Activated B cell treated with CpG ODN at 0.5 μM for 24 hours (primary cell): ENCODE measurements at regions of chr14 and their contacts with region 1.

Region 1: DNA sequence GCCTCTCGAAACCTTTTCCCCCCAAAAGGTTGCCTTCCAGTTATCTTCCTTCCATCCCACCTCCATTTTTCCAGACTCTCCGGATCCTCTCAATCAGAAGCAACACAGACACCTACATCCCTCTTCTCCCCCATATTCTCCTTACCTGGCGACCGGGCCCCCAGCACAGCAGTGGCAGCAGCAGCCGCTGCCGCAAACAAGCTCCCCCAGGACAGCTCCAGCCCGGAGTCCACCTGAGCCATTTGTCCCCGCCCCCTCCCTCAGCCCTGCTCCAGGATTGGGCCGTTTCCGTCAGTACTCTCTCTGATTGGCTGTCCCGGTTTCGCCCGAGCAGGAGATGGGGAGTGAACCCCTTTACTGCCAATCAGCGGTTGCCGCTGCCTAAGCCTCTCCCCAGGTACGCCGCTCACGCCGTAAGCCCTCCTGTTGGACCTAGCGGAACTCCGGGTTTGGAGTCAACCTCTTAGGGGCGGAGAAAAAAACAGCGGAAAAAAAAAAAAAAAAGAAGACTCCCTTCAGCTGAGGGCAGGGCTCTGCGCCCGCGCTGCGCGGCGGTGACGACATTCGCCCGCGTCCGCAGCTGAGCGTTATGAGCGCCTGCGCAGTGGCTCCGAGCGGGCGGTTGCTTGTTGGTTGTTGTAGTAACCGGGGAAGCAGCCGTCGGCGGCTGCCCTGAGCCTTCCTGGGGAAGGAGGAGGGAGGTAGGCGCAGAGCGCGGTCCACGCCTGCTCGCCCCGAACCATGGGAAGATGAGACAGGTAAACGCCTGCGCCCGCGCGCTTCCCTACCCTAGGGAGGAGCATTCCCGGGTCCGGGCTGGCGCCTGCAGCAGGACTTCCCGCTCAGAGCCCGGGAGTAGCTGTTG is at the starts of genes ERG28 and TTLL5:
- DNase-seq: peak; percentile 94
- ATAC-seq: peak; percentile 92
- H3K4me3 Mint-ChIP-seq: peak within 1 kb of the TSS; percentile 99
- H3K27ac Mint-ChIP-seq: peak within 1 kb of the TSS; percentile 97
- H3K4me1 Mint-ChIP-seq: peaks cover 25% of the 10 kb centered on the region
- H3K27me3 Mint-ChIP-seq: no peaks in the 10 kb centered on the region
- CTCF ChIP-seq: no peak
- total RNA-seq, gene ERG28: 28.4 and 30.7 TPM in 2 replicates
- total RNA-seq, gene TTLL5: 37.9 and 39.1 TPM in 2 replicates

Region 2: GRCh38 chr14:74762917-74763802 is 897.7 kb before region 1 on chr14 and contains the start of gene YLPM1:
- CTCF ChIA-PET with region 1: no interaction called
- POLR2A ChIA-PET with region 1: no interaction called
- intact Hi-C with region 1: loop called (anchors 2 kb)
- DNase-seq: peak; percentile 86
- ATAC-seq: peak; percentile 95
- H3K4me3 Mint-ChIP-seq: peak within 1 kb of the TSS; percentile 90
- H3K27ac Mint-ChIP-seq: peak within 1 kb of the TSS; percentile 90
- H3K4me1 Mint-ChIP-seq: peaks cover 55% of the 10 kb centered on the region
- H3K27me3 Mint-ChIP-seq: no peaks in the 10 kb centered on the region
- CTCF ChIP-seq: no peak
- total RNA-seq, gene YLPM1: 68.5 and 85.9 TPM in 2 replicates

Region 3: GRCh38 chr14:75126679-75127473 is 534.0 kb before region 1 on chr14 and contains the start of gene NEK9:
- CTCF ChIA-PET with region 1: interaction called, 3 read pairs
- POLR2A ChIA-PET with region 1: interaction called, 9 read pairs
- intact Hi-C with region 1: loop called (anchors 2 kb)
- DNase-seq: peak; percentile 86
- ATAC-seq: peak; percentile 88
- H3K4me3 Mint-ChIP-seq: peak within 1 kb of the TSS; percentile 96
- H3K27ac Mint-ChIP-seq: peak within 1 kb of the TSS; percentile 94
- H3K4me1 Mint-ChIP-seq: peaks cover 38% of the 10 kb centered on the region
- H3K27me3 Mint-ChIP-seq: no peaks in the 10 kb centered on the region
- CTCF ChIP-seq: no peak
- total RNA-seq, gene NEK9: 96.1 and 97.7 TPM in 2 replicates

Region 4: DNA sequence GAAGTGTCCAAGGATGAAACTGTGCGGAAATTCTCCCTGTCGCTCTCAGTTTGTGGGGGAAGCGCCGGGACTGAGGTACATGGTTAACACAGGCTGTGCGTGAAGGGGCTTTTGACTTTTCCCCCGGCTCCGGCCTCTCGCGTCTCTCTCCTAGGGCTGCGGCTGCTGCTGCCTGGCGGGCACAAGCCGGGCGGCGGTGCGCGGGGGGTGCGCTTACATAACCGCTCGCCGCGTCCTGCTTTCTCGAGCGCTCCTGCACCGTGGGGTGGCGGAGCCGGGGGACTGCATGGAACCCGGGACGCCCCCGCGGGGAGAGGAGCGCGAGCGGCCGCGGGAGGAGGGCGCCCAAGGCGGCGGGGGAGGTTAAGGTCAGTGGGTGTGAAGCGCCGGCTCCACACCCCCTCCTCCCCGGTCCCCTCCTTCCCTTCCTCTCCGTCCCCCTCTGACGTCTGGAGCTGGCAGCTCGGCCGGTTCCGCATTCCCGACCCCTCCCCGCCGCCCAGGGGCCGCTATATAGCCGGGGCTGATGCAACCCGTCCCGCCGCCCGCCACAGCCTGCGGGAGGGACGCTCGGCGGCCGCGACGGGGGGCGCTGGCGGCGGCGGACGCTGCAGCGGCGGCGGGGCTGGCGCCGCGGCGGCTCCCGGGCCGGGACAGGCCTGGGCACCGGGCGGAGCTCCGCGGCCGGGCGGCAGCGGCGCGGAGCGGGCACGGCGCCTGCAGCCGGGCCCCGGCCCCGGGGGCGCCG is 233.2 kb before region 1 on chr14 and contains the start of gene JDP2:
- CTCF ChIA-PET with region 1: no interaction called
- POLR2A ChIA-PET with region 1: interaction called, 4 read pairs
- intact Hi-C with region 1: loop called (anchors 2 kb)
- DNase-seq: peak; percentile 57
- ATAC-seq: peak; percentile 53
- H3K4me3 Mint-ChIP-seq: peak within 1 kb of the TSS; percentile 88
- H3K27ac Mint-ChIP-seq: peak within 1 kb of the TSS; percentile 96
- H3K4me1 Mint-ChIP-seq: peaks cover 37% of the 10 kb centered on the region
- H3K27me3 Mint-ChIP-seq: no peaks in the 10 kb centered on the region
- CTCF ChIP-seq: no peak
- total RNA-seq, gene JDP2: 21.2 and 21.8 TPM in 2 replicates

Region 5: DNA sequence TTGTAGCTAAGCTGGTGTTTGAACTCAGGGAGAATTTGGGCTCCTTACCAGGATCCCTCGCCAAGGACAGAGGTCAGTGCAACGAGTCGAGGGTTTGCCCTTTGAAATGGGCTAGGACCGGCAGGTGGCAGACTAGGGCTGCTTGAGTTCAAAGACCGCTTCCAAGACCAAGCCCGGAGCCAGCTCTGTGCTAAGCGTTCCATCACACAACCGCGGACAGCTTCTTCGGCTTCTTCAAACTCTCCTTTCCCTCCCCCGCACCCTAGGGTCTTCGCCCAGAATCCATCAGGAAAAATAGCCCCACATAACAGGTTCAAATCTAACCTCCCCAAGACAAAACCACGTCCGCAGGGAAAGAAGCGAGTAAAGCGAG is 83.1 kb before region 1 on chr14:
- CTCF ChIA-PET with region 1: interaction called, 264 read pairs
- POLR2A ChIA-PET with region 1: interaction called, 10 read pairs
- intact Hi-C with region 1: no loop called
- DNase-seq: peak; percentile 60
- ATAC-seq: peak; percentile 85
- H3K4me3 Mint-ChIP-seq: peak overlapping the region; percentile 89
- H3K27ac Mint-ChIP-seq: peak overlapping the region; percentile 72
- H3K4me1 Mint-ChIP-seq: peaks cover 29% of the 10 kb centered on the region
- H3K27me3 Mint-ChIP-seq: peaks cover 3% of the 10 kb centered on the region
- CTCF ChIP-seq: peak; percentile 36

Region 6: GRCh38 chr14:75648066-75648838 is 12.6 kb before region 1 on chr14:
- CTCF ChIA-PET with region 1: no interaction called
- POLR2A ChIA-PET with region 1: no interaction called
- intact Hi-C with region 1: no loop called
- DNase-seq: no peak
- ATAC-seq: no peak
- H3K4me3 Mint-ChIP-seq: no peak overlapping the region
- H3K27ac Mint-ChIP-seq: no peak overlapping the region
- H3K4me1 Mint-ChIP-seq: no peaks in the 10 kb centered on the region
- H3K27me3 Mint-ChIP-seq: no peaks in the 10 kb centered on the region
- CTCF ChIP-seq: no peak

Region 7: GRCh38 chr14:76151398-76152339 is 490.8 kb after region 1 on chr14 and contains the start of gene GPATCH2L:
- CTCF ChIA-PET with region 1: no interaction called
- POLR2A ChIA-PET with region 1: no interaction called
- intact Hi-C with region 1: loop called (anchors 2 kb)
- DNase-seq: peak; percentile 97
- ATAC-seq: peak; percentile 93
- H3K4me3 Mint-ChIP-seq: peak within 1 kb of the TSS; percentile 97
- H3K27ac Mint-ChIP-seq: peak within 1 kb of the TSS; percentile 94
- H3K4me1 Mint-ChIP-seq: peaks cover 53% of the 10 kb centered on the region
- H3K27me3 Mint-ChIP-seq: no peaks in the 10 kb centered on the region
- CTCF ChIP-seq: no peak
- total RNA-seq, gene GPATCH2L: 64.8 and 82.3 TPM in 2 replicates

Region 8: GRCh38 chr14:76219873-76220272 is 559.0 kb after region 1 on chr14:
- CTCF ChIA-PET with region 1: no interaction called
- POLR2A ChIA-PET with region 1: no interaction called
- intact Hi-C with region 1: no loop called
- DNase-seq: no peak
- ATAC-seq: no peak
- H3K4me3 Mint-ChIP-seq: no peak overlapping the region
- H3K27ac Mint-ChIP-seq: no peak overlapping the region
- H3K4me1 Mint-ChIP-seq: no peaks in the 10 kb centered on the region
- H3K27me3 Mint-ChIP-seq: peaks cover 2% of the 10 kb centered on the region
- CTCF ChIP-seq: no peak